ENCODE measurements at regions of chr10 and their contacts with region 1.

Region 1: GRCh38 chr10:58952747-58953466 is 223.5 kb upstream of the PHYHIPL start:
- DNase-seq: peak; percentile 40 to 74
- H3K4me3 ChIP-seq: no peak overlapping the region
- H3K4me1 ChIP-seq: no peaks in the 10 kb centered on the region
- H3K27me3 ChIP-seq: no peaks in the 10 kb centered on the region

Region 2: GRCh38 chr10:59222788-59223187 is 269.9 kb after region 1 on chr10:
- in situ Hi-C with region 1: loop called (anchors 25 kb)
- DNase-seq: no peak
- H3K4me3 ChIP-seq: no peak overlapping the region
- H3K4me1 ChIP-seq: no peaks in the 10 kb centered on the region
- H3K27me3 ChIP-seq: no peaks in the 10 kb centered on the region

Region 3: DNA sequence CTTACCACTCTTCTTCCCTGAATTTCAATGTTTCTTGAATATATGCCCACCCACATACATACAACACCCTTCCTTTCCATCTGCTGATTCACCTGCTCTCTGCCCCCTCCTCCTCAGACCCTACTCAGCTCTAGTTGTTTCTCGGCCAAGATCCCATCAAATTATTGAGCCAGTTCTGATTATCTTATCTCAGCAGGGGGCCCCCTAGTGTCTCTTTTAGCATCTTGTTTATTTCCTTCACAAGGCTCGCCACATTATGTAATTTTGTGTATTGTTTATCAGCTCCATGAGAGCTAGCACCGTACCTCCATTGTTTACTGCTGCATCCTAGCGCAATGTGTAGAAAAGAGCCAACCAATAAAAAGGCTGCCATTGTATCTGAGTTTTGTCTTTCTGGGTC is 337.5 kb after region 1 on chr10:
- in situ Hi-C with region 1: no loop called
- DNase-seq: no peak
- H3K4me3 ChIP-seq: no peak overlapping the region
- H3K4me1 ChIP-seq: peaks cover under 1% of the 10 kb centered on the region; the same call in 1 of the 2 replicates
- H3K27me3 ChIP-seq: no peaks in the 10 kb centered on the region

Measured in HAP-1 (cell line).